Aorta (tissue), 5 donors: ENCODE measurements at regions of chr11 and their contacts with region 1.

Region 1: DNA sequence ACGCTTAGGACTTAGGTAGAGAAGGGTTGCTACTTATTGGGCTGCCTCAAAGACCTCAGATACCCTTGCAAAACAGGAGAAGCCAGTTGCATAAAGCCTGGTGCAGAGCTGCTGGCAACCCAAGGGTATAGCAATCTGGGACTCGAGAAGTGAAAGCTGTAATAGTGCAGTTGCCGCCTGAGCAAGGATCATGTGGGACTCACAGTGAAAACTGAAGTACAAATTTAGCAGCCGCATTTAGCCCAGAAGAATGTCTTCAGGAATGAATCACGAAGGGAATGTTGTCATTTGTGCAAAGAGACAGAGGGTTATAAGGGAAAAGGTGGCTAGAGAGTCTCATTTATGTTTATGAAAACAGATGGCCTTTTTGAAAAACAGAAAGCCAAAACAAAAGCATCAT is 267.2 kb downstream of the TENM4 start:
- DNase-seq: peak in 1 of 2 donors; percentile 50
- ATAC-seq: peak; percentile 78
- H3K4me3 ChIP-seq: no peak overlapping the region
- H3K27ac ChIP-seq: peak overlapping the region; percentile 55 to 57
- H3K4me1 ChIP-seq: no peaks in the 10 kb centered on the region
- H3K27me3 ChIP-seq: no peaks in the 10 kb centered on the region

Region 2: GRCh38 chr11:79244241-79244772 is 70.7 kb after region 1 on chr11:
- intact Hi-C with region 1: loop called in 1 of 2 experiments (anchors 10 kb)
- DNase-seq: no peak
- ATAC-seq: peak; percentile 78
- H3K4me3 ChIP-seq: no peak overlapping the region
- H3K27ac ChIP-seq: peak overlapping the region; percentile 2 to 82
- H3K4me1 ChIP-seq: peaks cover 2 to 8% of the 10 kb centered on the region in 2 donors
- H3K27me3 ChIP-seq: no peaks in the 10 kb centered on the region

Region 3: DNA sequence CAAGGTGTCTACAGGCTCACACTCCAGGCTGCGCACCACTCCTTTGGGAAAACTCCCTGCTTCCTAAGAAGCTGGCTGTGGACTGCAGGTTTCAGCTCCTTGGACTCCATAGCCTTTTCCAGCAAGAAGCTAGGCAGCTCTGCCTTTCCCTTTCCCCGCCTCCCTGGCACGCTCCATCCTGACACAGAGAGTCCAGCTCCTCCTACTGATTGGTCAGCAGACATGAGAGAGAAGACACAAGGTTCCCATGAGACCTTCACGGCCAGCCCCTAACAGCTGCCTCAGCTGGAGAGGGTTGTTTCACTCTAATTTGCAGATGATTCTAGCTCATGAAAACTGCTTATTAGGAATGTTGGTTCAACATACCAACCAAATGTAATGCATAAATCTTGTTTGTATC is 239.7 kb after region 1 on chr11:
- intact Hi-C with region 1: loop called in 1 of 2 experiments (anchors 10 kb)
- DNase-seq: peak; percentile 92
- ATAC-seq: peak; percentile 91
- H3K4me3 ChIP-seq: no peak overlapping the region
- H3K27ac ChIP-seq: peak overlapping the region in 1 of 2 donors; percentile 33
- H3K4me1 ChIP-seq: peaks cover 0 to 11% of the 10 kb centered on the region in 2 donors
- H3K27me3 ChIP-seq: no peaks in the 10 kb centered on the region